ENCODE measurements at regions of chr1 and their contacts with region 1.

Region 1: DNA sequence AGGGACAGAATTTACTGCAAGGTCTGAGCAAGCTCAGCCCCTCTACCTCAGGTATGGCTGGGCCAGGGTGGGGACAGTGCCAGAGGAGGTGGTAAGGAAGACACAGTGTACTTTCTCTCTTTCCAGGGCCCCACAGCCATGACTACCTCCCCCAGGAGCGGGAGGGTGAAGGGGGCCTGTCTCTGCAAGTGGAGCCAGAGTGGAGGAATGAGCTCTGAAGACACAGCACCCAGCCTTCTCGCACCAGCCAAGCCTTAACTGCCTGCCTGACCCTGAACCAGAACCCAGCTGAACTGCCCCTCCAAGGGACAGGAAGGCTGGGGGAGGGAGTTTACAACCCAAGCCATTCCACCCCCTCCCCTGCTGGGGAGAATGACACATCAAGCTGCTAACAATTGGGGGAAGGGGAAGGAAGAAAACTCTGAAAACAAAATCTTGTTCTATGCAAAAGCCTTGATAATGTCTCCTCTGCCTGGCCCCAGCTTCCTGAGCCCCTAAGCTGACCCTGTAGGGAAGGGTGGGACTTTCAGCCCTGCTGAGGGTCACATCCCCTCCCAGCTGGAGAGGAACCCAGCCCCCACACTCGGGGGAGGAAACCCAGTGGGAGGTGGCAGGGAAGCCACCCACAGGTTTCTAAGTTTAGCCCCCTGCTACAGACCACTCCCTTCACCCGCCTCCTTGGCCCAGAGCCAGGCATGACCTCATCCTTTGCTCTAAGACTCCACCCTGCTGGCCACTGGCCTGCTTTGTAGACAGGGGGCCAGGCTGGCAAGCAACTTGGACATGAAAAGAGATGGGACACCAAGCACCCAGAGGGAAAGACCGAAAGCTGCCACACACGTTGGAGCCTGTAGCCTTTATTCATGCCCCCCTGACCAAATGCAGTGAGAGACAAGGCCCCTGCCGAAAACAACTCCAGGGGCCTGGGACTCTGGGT is 6.4 kb downstream of the RHOC start:
- DNase-seq: peak; percentile 90
- ATAC-seq: peak; percentile 58
- H3K4me3 ChIP-seq: peak overlapping the region in 1 of 3 experiments; percentile 26; a peak in 1 of 6 replicates
- H3K27ac ChIP-seq: peak overlapping the region; percentile 93
- H3K4me1 ChIP-seq: peaks cover 81% of the 10 kb centered on the region
- H3K27me3 ChIP-seq: no peaks in the 10 kb centered on the region; a peak in 1 of 5 replicates
- CTCF ChIP-seq: peak; percentile 38
- EP300 ChIP-seq: 0 out of 4 replicates have a peak, but pooled peaks of 1 of the 2 experiments have one; percentile 15
- POLR2A ChIP-seq: 0 out of 4 replicates have a peak, but pooled peaks of 1 of the 2 experiments have one; percentile 20
- RAD21 ChIP-seq: no peak

Region 2: GRCh38 chr1:112674439-112674985 is 26.0 kb before region 1 on chr1 and contains the start of gene MOV10:
- CTCF ChIA-PET with region 1: no interaction called
- POLR2A ChIA-PET with region 1: interaction called, 251 read pairs
- in situ Hi-C with region 1: loop called (anchors 5 kb)
- intact Hi-C with region 1: loop called (anchors 2 kb)
- DNase-seq: peak; percentile 67
- ATAC-seq: peak; percentile 87
- H3K4me3 ChIP-seq: peak within 1 kb of the TSS; percentile 82 to 91 (median 83)
- H3K27ac ChIP-seq: peak within 1 kb of the TSS; percentile 90
- H3K4me1 ChIP-seq: peaks cover 49% of the 10 kb centered on the region
- H3K27me3 ChIP-seq: no peaks in the 10 kb centered on the region; a peak in 1 of 5 replicates
- CTCF ChIP-seq: peak; percentile 35
- EP300 ChIP-seq: 0 out of 4 replicates have a peak, but pooled peaks of 1 of the 2 experiments have one; percentile 16
- POLR2A ChIP-seq: peak in 1 of 2 experiments; percentile 75; a peak in 3 of 4 replicates
- RAD21 ChIP-seq: no peak
- total RNA-seq, gene MOV10: 38.0 and 56.4 TPM in 2 replicates

Region 3: DNA sequence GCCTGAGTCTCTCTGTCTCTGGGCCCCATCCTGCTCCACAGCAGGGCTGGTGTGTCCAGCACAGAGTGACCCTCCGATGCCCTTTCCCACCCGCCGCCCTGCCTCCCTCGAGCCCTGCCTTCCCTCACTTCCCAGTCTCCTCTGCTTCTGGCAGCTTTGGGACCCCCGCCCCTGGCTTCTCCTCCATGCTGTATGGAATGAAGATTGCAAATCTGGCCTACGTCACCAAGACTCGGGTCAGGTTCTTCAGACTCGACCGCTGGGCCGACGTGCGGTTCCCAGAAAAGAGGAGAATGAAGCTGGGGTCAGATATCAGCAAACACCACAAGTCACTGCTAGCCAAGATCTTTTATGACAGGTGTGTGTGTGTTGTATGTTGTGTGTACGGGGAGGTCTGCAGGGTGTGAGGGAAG is 11.8 kb before region 1 on chr1:
- CTCF ChIA-PET with region 1: no interaction called
- POLR2A ChIA-PET with region 1: interaction called, 12 read pairs
- in situ Hi-C with region 1: no loop called
- intact Hi-C with region 1: no loop called
- DNase-seq: no peak
- ATAC-seq: no peak
- H3K4me3 ChIP-seq: no peak overlapping the region
- H3K27ac ChIP-seq: no peak overlapping the region
- H3K4me1 ChIP-seq: no peaks in the 10 kb centered on the region
- H3K27me3 ChIP-seq: no peaks in the 10 kb centered on the region
- CTCF ChIP-seq: no peak
- EP300 ChIP-seq: no peak
- POLR2A ChIP-seq: no peak
- RAD21 ChIP-seq: no peak

Region 4: DNA sequence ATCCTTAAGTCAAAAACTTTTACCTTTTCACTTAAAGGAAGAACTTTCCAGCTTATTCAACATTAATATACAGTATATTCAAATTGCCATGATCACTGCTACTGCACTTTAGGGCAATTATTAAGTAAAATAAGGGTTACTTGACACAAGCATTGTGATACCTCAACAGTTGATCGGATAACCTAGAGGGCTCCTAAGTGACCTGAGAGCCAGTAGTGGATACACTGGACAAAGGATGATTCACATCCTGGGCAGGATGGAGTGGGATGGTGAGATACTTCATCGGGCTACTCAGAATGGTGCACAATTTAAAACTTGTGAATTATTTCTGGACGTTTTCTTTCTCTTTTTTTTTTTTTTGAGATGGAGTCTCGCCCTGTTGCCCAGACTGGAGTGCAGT is 69.1 kb after region 1 on chr1:
- CTCF ChIA-PET with region 1: no interaction called
- POLR2A ChIA-PET with region 1: no interaction called
- in situ Hi-C with region 1: no loop called
- intact Hi-C with region 1: no loop called
- DNase-seq: no peak
- ATAC-seq: no peak
- H3K4me3 ChIP-seq: no peak overlapping the region
- H3K27ac ChIP-seq: no peak overlapping the region
- H3K4me1 ChIP-seq: no peaks in the 10 kb centered on the region
- H3K27me3 ChIP-seq: peaks cover 0 to 12% of the 10 kb centered on the region in 2 experiments; a peak in 2 of 5 replicates
- CTCF ChIP-seq: no peak
- EP300 ChIP-seq: no peak
- POLR2A ChIP-seq: no peak
- RAD21 ChIP-seq: no peak